GM10248 (cell line): ENCODE measurements at regions of chr17 and their contacts with region 1.

Region 1: DNA sequence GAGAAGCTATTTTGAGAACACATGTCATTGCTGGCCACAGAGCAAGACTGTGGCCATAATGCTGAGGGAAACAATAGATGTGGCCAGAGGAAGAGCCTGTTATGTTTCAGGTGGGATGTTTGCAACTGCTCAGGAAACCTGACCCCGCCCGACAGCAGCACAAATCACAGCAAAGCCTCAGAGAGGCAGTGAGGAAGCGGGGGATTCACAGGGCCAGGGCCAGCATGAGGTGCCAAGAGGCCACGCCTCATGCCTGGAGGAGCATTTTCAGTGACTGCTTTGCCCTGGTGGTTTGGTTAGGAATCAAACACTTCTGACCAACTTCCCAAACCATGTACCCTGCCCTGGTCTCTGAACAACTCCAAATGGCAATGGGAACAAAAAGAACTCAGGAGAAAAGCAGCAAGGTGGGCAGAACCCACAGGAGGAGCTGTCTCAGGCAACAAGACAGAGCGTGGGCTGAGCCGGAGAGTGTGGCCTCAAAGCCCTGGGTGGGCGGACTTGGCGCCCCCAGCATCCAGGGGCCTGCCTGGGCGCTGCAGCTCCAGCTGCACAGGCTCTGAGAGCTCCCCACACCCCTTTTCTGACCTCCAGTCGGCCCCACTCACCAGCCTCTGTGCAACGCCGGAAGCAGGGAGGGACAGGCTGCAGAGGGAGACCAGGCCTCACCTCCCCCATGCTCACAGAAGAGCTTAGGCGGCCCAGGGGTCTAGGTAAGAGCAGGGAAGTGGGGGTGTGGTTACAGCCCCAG is 20.6 kb downstream of the HIC1 start:
- DNase-seq: peak; percentile 37
- CTCF ChIP-seq: no peak

Region 2: GRCh38 chr17:2094891-2095535 is 19.5 kb after region 1 on chr17:
- CTCF ChIA-PET with region 1: interaction called, 99 read pairs
- POLR2A ChIA-PET with region 1: interaction called, 3 read pairs
- DNase-seq: peak; percentile 43
- CTCF ChIP-seq: peak; percentile 55

Region 3: DNA sequence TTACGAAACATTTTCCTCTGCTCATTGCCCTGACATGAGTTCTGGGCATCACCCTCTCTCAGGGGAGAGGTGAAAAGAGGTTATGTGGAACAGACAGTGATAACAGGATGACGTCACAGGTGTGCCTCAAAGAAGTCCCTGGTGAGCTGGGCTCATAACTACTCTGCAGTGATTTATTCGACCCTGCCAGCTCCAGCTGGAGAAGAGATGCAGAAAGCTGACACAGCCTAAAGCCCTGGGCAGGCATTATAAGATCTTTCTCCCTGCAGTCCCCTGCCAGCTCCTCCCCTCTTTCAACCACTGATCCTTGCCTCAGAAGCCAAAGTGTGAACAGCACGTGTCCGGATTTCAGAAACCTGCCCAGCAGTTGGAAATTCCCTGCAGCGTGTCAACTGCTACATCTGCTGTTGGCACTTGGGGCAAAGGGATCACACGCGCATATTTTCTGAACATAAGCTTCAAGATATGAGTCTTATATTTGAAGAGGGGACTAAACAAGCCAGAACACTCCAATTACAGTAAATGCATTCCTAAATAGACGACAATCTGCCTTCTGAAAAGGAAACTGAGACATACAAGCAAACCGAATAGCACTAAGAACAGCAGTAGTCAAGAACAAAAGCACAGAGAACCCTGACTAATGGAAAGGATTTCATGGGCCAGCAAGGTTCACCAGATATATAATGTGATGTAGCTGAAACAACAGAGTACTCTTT is 147.5 kb after region 1 on chr17:
- CTCF ChIA-PET with region 1: interaction called, 10 read pairs
- POLR2A ChIA-PET with region 1: no interaction called
- DNase-seq: peak; percentile 50
- CTCF ChIP-seq: no peak

Region 4: GRCh38 chr17:2309338-2310154 is 234.0 kb after region 1 on chr17:
- CTCF ChIA-PET with region 1: no interaction called
- POLR2A ChIA-PET with region 1: no interaction called
- DNase-seq: no peak
- CTCF ChIP-seq: no peak